ENCODE measurements at regions of chr17 and their contacts with region 1.

Region 1: GRCh38 chr17:59106463-59107305 is at the start of gene TRIM37:
- DNase-seq: peak; percentile 100
- H3K4me3 Mint-ChIP-seq: peak within 1 kb of the TSS; percentile 94
- H3K27ac Mint-ChIP-seq: peak within 1 kb of the TSS; percentile 93
- H3K4me1 Mint-ChIP-seq: peaks cover 43% of the 10 kb centered on the region
- H3K27me3 Mint-ChIP-seq: no peaks in the 10 kb centered on the region
- total RNA-seq, gene TRIM37: 28.4 and 31.4 TPM in 2 replicates

Region 2: GRCh38 chr17:58517734-58518609 is 588.7 kb before region 1 on chr17:
- intact Hi-C with region 1: loop called (anchors 2 kb)
- DNase-seq: peak; percentile 100
- H3K4me3 Mint-ChIP-seq: peak overlapping the region; percentile 89
- H3K27ac Mint-ChIP-seq: peak overlapping the region; percentile 95
- H3K4me1 Mint-ChIP-seq: peaks cover 34% of the 10 kb centered on the region
- H3K27me3 Mint-ChIP-seq: peaks cover 2% of the 10 kb centered on the region

Region 3: GRCh38 chr17:59046192-59046591 is 60.5 kb before region 1 on chr17:
- intact Hi-C with region 1: no loop called
- DNase-seq: no peak
- H3K4me3 Mint-ChIP-seq: no peak overlapping the region
- H3K27ac Mint-ChIP-seq: no peak overlapping the region
- H3K4me1 Mint-ChIP-seq: no peaks in the 10 kb centered on the region
- H3K27me3 Mint-ChIP-seq: no peaks in the 10 kb centered on the region

Region 4: GRCh38 chr17:59155439-59156182 is 48.9 kb after region 1 on chr17 and contains the start of gene PRR11:
- intact Hi-C with region 1: loop called (anchors 1 kb)
- DNase-seq: peak; percentile 95
- H3K4me3 Mint-ChIP-seq: no peak within 1 kb of the TSS
- H3K27ac Mint-ChIP-seq: no peak within 1 kb of the TSS
- H3K4me1 Mint-ChIP-seq: peaks cover 51% of the 10 kb centered on the region
- H3K27me3 Mint-ChIP-seq: no peaks in the 10 kb centered on the region
- total RNA-seq, gene PRR11: 50.2 and 51.5 TPM in 2 replicates

Region 5: DNA sequence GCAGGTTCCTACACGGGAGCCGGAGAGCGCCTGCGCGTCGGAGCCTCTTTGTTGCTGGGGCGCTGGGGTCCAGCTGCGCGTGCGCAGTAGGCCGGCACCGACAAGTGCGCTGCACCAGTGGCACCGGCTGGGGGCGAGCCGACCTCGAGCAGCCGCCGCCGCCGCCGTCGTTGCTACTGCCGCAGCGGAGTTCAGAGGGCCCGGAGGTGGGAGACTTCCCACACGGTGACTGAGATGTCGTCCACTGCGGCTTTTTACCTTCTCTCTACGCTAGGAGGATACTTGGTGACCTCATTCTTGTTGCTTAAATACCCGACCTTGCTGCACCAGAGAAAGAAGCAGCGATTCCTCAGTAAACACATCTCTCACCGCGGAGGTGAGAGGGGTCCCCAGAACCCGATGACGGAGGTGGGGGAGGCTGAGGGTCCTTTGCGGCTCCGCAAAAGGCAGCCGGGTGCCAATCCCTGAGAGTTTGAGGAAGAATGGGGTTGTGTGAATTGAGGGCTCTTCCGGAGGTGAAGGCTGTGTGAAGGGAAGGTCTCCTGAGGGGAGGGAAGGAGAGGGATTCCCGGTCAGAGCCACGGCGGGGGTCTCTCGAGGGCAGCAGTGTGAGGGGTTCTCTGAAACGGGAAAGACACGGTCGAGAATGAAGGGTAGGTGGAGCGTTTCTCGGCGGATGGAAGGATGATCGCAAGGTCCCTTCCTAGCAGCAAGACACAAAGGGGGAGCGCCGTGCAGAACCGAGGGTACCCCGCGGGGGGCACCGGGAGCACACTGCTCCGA is 113.9 kb after region 1 on chr17 and contains the start of gene GDPD1:
- intact Hi-C with region 1: loop called (anchors 5 kb)
- DNase-seq: peak; percentile 96
- H3K4me3 Mint-ChIP-seq: peak within 1 kb of the TSS; percentile 100
- H3K27ac Mint-ChIP-seq: peak within 1 kb of the TSS; percentile 91
- H3K4me1 Mint-ChIP-seq: peaks cover 13% of the 10 kb centered on the region
- H3K27me3 Mint-ChIP-seq: no peaks in the 10 kb centered on the region
- total RNA-seq, gene GDPD1: 2.3 and 2.7 TPM in 2 replicates

Measured in activated T-helper 2 cell treated with anti-CD3 and anti-CD28 coated beads, Interferon-gamma antibody, Interleukin-2, Interleukin-4, amounts not matched to agents 10 μg/mL and 5 μg/mL and 100 μg/mL, durations not matched to agents 14 hours and 24 hours and 36 hours (primary cell).